Activated T-helper 1 cell treated with anti-CD3 and anti-CD28 coated beads, Interleukin-12 subunit alpha, Interleukin-12 subunit beta, Interleukin-2, Interleukin-4 antibody, amounts not matched to agents 30 ng/mL and 10 ng/mL and 1 ng/mL, durations not matched to agents 14 hours and 24 hours and 36 hours (primary cell): ENCODE measurements at regions of chr17 and their contacts with region 1.

Region 1: GRCh38 chr17:74457146-74457819 is 9.2 kb upstream of the CD300A start:
- DNase-seq: peak; percentile 54
- H3K4me3 Mint-ChIP-seq: no peak overlapping the region
- H3K27ac Mint-ChIP-seq: peak overlapping the region; percentile 23
- H3K4me1 Mint-ChIP-seq: peaks cover 28% of the 10 kb centered on the region
- H3K27me3 Mint-ChIP-seq: peaks cover 10% of the 10 kb centered on the region

Region 2: DNA sequence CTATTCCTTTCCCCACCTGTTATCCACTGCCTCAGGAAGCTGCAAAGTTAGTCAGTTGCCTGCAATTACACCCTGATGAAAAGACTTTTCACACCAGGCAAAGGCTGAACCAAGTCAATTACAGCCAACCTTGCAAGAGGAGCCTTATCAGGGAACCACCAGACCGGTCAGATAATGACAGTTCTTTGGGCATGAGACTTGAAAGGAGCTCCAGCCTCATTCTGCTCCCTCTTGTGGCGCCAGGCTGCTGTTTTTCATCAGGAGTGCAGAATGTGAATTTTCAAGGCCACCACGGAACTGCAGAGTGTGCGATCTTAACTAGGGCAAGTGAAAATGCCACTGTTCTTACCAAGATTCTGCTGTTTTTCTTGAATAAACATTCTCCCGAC is 160.7 kb before region 1 on chr17:
- intact Hi-C with region 1: loop called (anchors 1 kb)
- DNase-seq: peak; percentile 24
- H3K4me3 Mint-ChIP-seq: no peak overlapping the region
- H3K27ac Mint-ChIP-seq: no peak overlapping the region
- H3K4me1 Mint-ChIP-seq: peaks cover 21% of the 10 kb centered on the region
- H3K27me3 Mint-ChIP-seq: peaks cover 11% of the 10 kb centered on the region

Region 3: DNA sequence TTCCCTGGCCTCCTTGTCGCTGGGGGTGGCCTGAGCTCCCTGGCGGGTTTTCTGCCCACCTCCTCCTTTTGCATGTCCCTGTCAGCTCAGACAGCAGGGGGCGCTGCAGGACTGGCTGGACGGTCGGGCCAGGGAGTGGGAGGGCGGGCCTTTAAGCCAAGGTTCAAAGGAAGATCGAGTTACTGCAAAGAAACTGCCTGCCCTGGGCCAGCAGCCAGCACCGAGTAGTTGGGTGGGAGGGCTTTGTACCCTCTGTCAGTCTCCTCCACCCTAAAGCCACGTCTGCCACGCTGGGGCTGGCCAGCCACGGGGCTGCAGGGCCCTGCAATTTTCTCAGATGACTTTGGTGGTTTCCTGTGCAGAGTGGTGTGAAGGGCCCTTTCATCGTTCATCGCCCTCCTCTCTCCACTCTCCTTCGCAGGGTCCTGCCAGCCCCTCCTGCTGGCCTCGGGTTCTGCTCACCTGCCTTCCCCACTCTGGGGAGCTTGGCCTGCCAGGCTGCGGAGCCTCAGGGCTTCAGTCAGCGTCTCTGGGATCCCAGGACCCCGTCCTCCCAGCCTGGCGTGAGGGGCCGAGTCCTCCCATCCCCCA is 77.7 kb before region 1 on chr17:
- intact Hi-C with region 1: loop called (anchors 1 kb)
- DNase-seq: peak; percentile 83
- H3K4me3 Mint-ChIP-seq: no peak overlapping the region
- H3K27ac Mint-ChIP-seq: no peak overlapping the region
- H3K4me1 Mint-ChIP-seq: no peaks in the 10 kb centered on the region
- H3K27me3 Mint-ChIP-seq: peaks cover 7% of the 10 kb centered on the region

Region 4: GRCh38 chr17:74467221-74467951 is 10.1 kb after region 1 on chr17:
- intact Hi-C with region 1: loop called (anchors 1 kb)
- DNase-seq: no peak
- H3K4me3 Mint-ChIP-seq: no peak overlapping the region
- H3K27ac Mint-ChIP-seq: peak overlapping the region; percentile 82
- H3K4me1 Mint-ChIP-seq: peaks cover 52% of the 10 kb centered on the region
- H3K27me3 Mint-ChIP-seq: no peaks in the 10 kb centered on the region